Naive thymus-derived CD4-positive, alpha-beta T cell (primary cell): ENCODE measurements at regions of chr7 and their contacts with region 1.

Region 1: DNA sequence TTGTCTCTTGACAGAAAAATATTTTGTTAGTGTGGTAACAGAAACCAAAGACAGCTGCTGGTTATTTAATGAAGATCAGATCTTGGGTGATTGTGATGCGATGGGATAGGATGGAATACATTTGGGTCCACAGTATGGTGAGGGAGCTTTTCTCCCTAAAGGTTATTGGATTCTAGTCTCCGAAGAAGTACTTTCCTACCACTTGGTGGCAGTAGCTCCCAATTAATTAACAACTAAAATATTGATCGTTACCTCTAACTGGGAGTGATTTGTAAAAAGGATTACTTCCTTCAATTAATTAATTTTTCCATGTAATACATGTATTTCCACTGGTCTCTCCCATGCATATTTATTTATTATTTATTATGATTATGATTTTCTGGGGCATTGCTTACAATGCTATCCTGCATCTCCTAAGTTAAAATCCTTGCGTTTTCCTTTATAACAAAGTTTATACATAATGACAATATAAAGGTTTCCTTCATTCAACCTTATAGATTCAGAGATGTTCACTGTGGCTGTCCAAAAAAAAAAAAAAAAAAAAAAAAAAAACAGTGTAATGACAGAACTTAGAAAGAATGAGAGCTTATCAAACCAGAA is 25.6 kb downstream of the TMEM196 start:
- DNase-seq: peak in 1 of 9 donors; percentile 1
- ATAC-seq: no peak
- H3K4me3 ChIP-seq: no peak overlapping the region
- H3K4me3 Mint-ChIP-seq: no peak overlapping the region
- H3K27ac ChIP-seq: no peak overlapping the region
- H3K27ac Mint-ChIP-seq: no peak overlapping the region
- H3K4me1 ChIP-seq: no peaks in the 10 kb centered on the region
- H3K4me1 Mint-ChIP-seq: no peaks in the 10 kb centered on the region
- H3K27me3 ChIP-seq: no peaks in the 10 kb centered on the region
- H3K27me3 Mint-ChIP-seq: peaks cover under 1 to 12% (median 4%) of the 10 kb centered on the region in 5 donors

Region 2: GRCh38 chr7:19648791-19649190 is 99.0 kb before region 1 on chr7:
- CTCF ChIA-PET with region 1: no interaction called
- POLR2A ChIA-PET with region 1: no interaction called
- intact Hi-C with region 1: no loop called
- DNase-seq: no peak
- ATAC-seq: no peak
- H3K4me3 ChIP-seq: no peak overlapping the region
- H3K4me3 Mint-ChIP-seq: no peak overlapping the region
- H3K27ac ChIP-seq: no peak overlapping the region
- H3K27ac Mint-ChIP-seq: no peak overlapping the region
- H3K4me1 ChIP-seq: no peaks in the 10 kb centered on the region
- H3K4me1 Mint-ChIP-seq: no peaks in the 10 kb centered on the region
- H3K27me3 ChIP-seq: no peaks in the 10 kb centered on the region
- H3K27me3 Mint-ChIP-seq: peaks cover 0 to 19% (median 7%) of the 10 kb centered on the region in 5 donors

Region 3: DNA sequence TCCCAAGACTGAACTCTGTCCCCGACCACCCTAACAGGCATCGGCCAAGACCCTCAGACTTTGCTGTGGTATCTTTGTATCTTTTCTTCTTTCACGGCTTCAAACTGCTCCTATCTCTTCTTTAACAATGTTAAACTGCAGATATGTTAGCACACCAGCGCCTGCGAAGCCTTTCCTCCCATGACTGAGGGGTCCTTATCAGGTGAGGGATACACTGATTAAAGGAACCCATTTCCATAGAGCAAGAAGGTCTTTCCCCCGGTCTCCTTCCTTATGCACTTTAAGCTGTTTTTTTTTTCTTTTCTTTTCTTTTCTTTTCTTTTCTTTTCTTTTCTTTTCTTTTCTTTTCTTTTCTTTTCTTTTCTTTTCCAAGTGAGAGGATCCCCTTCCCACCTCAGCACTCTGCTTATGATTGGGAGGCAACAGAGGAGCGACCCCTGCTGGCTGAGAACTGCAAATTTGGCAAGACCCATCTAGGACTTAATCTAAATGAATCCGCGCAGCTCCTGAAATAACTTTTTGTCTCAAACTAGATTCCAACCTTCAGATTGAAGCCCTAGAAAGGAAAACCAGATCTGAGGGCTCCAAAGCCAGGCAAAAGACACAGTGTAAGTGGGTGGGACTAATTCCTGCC is 692.7 kb after region 1 on chr7:
- CTCF ChIA-PET with region 1: no interaction called
- POLR2A ChIA-PET with region 1: no interaction called
- intact Hi-C with region 1: loop called in 1 of 2 experiments (anchors 5 kb)
- DNase-seq: no peak
- ATAC-seq: no peak
- H3K4me3 ChIP-seq: no peak overlapping the region
- H3K4me3 Mint-ChIP-seq: no peak overlapping the region
- H3K27ac ChIP-seq: no peak overlapping the region
- H3K27ac Mint-ChIP-seq: no peak overlapping the region
- H3K4me1 ChIP-seq: no peaks in the 10 kb centered on the region
- H3K4me1 Mint-ChIP-seq: no peaks in the 10 kb centered on the region
- H3K27me3 ChIP-seq: no peaks in the 10 kb centered on the region
- H3K27me3 Mint-ChIP-seq: peaks cover 0 to 5% (median 0%) of the 10 kb centered on the region in 5 donors

Region 4: GRCh38 chr7:20458521-20458920 is 710.7 kb after region 1 on chr7:
- CTCF ChIA-PET with region 1: no interaction called
- POLR2A ChIA-PET with region 1: no interaction called
- intact Hi-C with region 1: no loop called
- DNase-seq: no peak
- ATAC-seq: peak; percentile 34
- H3K4me3 ChIP-seq: no peak overlapping the region
- H3K4me3 Mint-ChIP-seq: no peak overlapping the region
- H3K27ac ChIP-seq: no peak overlapping the region
- H3K27ac Mint-ChIP-seq: no peak overlapping the region
- H3K4me1 ChIP-seq: no peaks in the 10 kb centered on the region
- H3K4me1 Mint-ChIP-seq: peaks cover 0 to 1% (median 0%) of the 10 kb centered on the region in 7 donors
- H3K27me3 ChIP-seq: no peaks in the 10 kb centered on the region
- H3K27me3 Mint-ChIP-seq: no peaks in the 10 kb centered on the region